ENCODE measurements at regions of chr1 and their contacts with region 1.

Region 1: GRCh38 chr1:244047621-244048471 is 3.2 kb upstream of the ZBTB18 start:
- DNase-seq: peak; percentile 99 to 100 (median 100)
- ATAC-seq: peak; percentile 97 to 99 (median 98)
- H3K4me3 ChIP-seq: peak overlapping the region; percentile 70 to 97 (median 85)
- H3K27ac ChIP-seq: peak overlapping the region; percentile 95 to 100 (median 98)
- H3K4me1 ChIP-seq: peaks cover 8 to 39% (median 24%) of the 10 kb centered on the region in 12 donors
- H3K27me3 ChIP-seq: no peaks in the 10 kb centered on the region
- CTCF ChIP-seq: peak in 1 of 12 donors; percentile 9
- POLR2A ChIP-seq: peak; percentile 77 to 98

Region 2: GRCh38 chr1:243255791-243256512 is 791.9 kb before region 1 on chr1 and contains the start of gene SDCCAG8:
- intact Hi-C with region 1: loop called in 1 of 10 experiments (anchors 10 kb)
- DNase-seq: peak; percentile 96 to 99 (median 99)
- ATAC-seq: peak; percentile 93 to 96 (median 96)
- H3K4me3 ChIP-seq: peak within 1 kb of the TSS; percentile 72 to 100 (median 84)
- H3K27ac ChIP-seq: peak within 1 kb of the TSS; percentile 93 to 98 (median 96)
- H3K4me1 ChIP-seq: peaks cover 0 to 66% (median 34%) of the 10 kb centered on the region in 12 donors
- H3K27me3 ChIP-seq: no peaks in the 10 kb centered on the region
- CTCF ChIP-seq: no peak
- POLR2A ChIP-seq: peak in 1 of 2 donors; percentile 87
- total RNA-seq, gene SDCCAG8: 16.7 to 36.6 (median 23.6) TPM

Region 3: GRCh38 chr1:243343970-243344937 is 703.6 kb before region 1 on chr1:
- intact Hi-C with region 1: loop called in 1 of 10 experiments (anchors 5 kb)
- DNase-seq: no peak
- ATAC-seq: no peak
- H3K4me3 ChIP-seq: no peak overlapping the region
- H3K27ac ChIP-seq: no peak overlapping the region
- H3K4me1 ChIP-seq: peaks cover 0 to 9% (median 0%) of the 10 kb centered on the region in 12 donors
- H3K27me3 ChIP-seq: no peaks in the 10 kb centered on the region
- CTCF ChIP-seq: peak; percentile 61 to 84 (median 80)
- POLR2A ChIP-seq: no peak

Region 4: GRCh38 chr1:243354511-243355153 is 693.2 kb before region 1 on chr1:
- intact Hi-C with region 1: loop called in 2 of 10 experiments (anchors 5 kb)
- DNase-seq: no peak
- ATAC-seq: peak in 1 of 4 donors; percentile 62
- H3K4me3 ChIP-seq: peak overlapping the region in 10 of 12 donors; percentile 8 to 48 (median 36)
- H3K27ac ChIP-seq: peak overlapping the region in 4 of 12 donors; percentile 26 to 43 (median 34)
- H3K4me1 ChIP-seq: peaks cover 0 to 16% (median 0%) of the 10 kb centered on the region in 12 donors
- H3K27me3 ChIP-seq: no peaks in the 10 kb centered on the region
- CTCF ChIP-seq: no peak
- POLR2A ChIP-seq: no peak

Region 5: GRCh38 chr1:243850452-243851256 is 197.2 kb before region 1 on chr1:
- intact Hi-C with region 1: loop called in 4 of 10 experiments (anchors 5 to 10 kb)
- DNase-seq: peak; percentile 80 to 87 (median 83)
- ATAC-seq: peak; percentile 22 to 70 (median 66)
- H3K4me3 ChIP-seq: peak overlapping the region; percentile 73 to 90 (median 80)
- H3K27ac ChIP-seq: peak overlapping the region; percentile 90 to 98 (median 94)
- H3K4me1 ChIP-seq: peaks cover 0 to 24% (median 8%) of the 10 kb centered on the region in 12 donors
- H3K27me3 ChIP-seq: peaks cover 0 to 24% (median 0%) of the 10 kb centered on the region in 9 donors
- CTCF ChIP-seq: no peak
- POLR2A ChIP-seq: peak in 1 of 2 donors; percentile 24

Region 6: DNA sequence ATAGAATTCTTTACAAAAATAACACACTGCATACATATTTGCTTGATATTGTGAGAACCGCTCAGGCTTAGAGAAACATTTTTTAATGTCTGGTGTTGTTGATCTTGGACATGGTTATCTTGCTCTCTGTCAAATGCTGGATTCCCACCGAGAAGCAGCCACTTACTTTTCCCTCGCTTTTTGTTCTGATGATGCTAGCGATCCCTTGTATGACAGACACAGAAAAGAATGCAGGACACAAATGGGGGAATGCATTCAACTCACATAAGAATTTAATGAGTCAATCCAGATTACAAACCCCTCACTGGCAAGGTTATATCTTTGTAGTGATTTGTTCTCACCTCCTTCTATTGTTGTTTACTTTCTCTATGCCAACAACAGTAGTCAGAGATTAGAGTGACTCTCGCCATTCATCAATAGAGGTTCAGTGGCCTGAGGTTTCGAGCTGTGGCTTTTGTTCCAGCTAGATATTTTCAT is 121.0 kb before region 1 on chr1:
- intact Hi-C with region 1: loop called in 1 of 10 experiments (anchors 10 kb)
- DNase-seq: no peak
- ATAC-seq: peak in 1 of 4 donors; percentile 37
- H3K4me3 ChIP-seq: no peak overlapping the region
- H3K27ac ChIP-seq: no peak overlapping the region
- H3K4me1 ChIP-seq: peaks cover 0 to 16% (median 0%) of the 10 kb centered on the region in 12 donors
- H3K27me3 ChIP-seq: peaks cover 0 to 10% (median 2%) of the 10 kb centered on the region in 9 donors
- CTCF ChIP-seq: no peak
- POLR2A ChIP-seq: no peak

Region 7: DNA sequence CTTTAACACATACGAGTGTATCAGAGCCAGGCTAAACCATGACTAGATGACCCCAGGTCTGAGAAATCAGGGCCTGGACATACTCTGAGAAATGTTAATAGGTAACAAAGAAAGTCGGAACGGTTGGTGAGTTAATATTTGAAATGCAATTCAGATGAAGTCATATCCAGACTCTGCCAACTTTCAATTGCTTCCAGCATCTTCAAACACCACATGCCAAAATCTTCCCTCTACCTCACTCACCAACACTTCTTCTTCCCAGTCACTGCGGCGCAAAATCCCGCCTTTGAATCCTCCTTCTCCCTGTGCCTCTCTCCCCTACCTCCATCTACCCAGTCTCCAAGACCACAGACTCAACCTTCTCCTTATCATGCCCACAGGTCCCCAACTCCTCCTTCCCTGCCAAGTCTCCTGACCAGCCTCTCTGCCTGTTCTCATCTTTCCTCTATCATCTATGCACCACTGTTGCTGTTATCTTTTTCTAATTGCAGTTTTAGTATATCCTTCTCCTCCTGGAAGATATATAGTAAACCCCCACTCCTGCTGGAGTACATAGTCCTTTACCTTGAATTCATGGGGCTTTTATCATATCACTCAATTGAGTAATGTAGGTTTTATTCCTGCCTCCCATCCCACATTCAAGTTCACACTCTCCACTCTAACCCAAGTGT is 44.6 kb after region 1 on chr1:
- intact Hi-C with region 1: no loop called
- DNase-seq: peak in 1 of 5 donors; percentile 3
- ATAC-seq: no peak
- H3K4me3 ChIP-seq: no peak overlapping the region
- H3K27ac ChIP-seq: no peak overlapping the region
- H3K4me1 ChIP-seq: no peaks in the 10 kb centered on the region
- H3K27me3 ChIP-seq: peaks cover 0 to 5% (median 0%) of the 10 kb centered on the region in 9 donors
- CTCF ChIP-seq: no peak
- POLR2A ChIP-seq: no peak

Region 8: GRCh38 chr1:244137725-244138124 is 89.9 kb after region 1 on chr1:
- intact Hi-C with region 1: no loop called
- DNase-seq: no peak
- ATAC-seq: peak in 1 of 4 donors; percentile 36
- H3K4me3 ChIP-seq: peak overlapping the region in 1 of 12 donors; percentile 28
- H3K27ac ChIP-seq: peak overlapping the region in 10 of 12 donors; percentile 28 to 79 (median 65)
- H3K4me1 ChIP-seq: peaks cover 0 to 24% (median 5%) of the 10 kb centered on the region in 12 donors
- H3K27me3 ChIP-seq: peaks cover 0 to 9% (median 0%) of the 10 kb centered on the region in 9 donors
- CTCF ChIP-seq: no peak
- POLR2A ChIP-seq: no peak

Region 9: GRCh38 chr1:244163861-244164562 is 116.2 kb after region 1 on chr1:
- intact Hi-C with region 1: loop called in 1 of 10 experiments (anchors 5 kb)
- DNase-seq: peak in 4 of 5 donors; percentile 27 to 67 (median 39)
- ATAC-seq: peak; percentile 88 to 97 (median 92)
- H3K4me3 ChIP-seq: no peak overlapping the region
- H3K27ac ChIP-seq: peak overlapping the region; percentile 46 to 88 (median 74)
- H3K4me1 ChIP-seq: peaks cover 0 to 17% (median 9%) of the 10 kb centered on the region in 12 donors
- H3K27me3 ChIP-seq: no peaks in the 10 kb centered on the region
- CTCF ChIP-seq: no peak
- POLR2A ChIP-seq: no peak